ENCODE measurements at regions of chr12 and their contacts with region 1.

Region 1: GRCh38 chr12:79844693-79845092 is 90.2 kb downstream of the PPP1R12A start:
- DNase-seq: no peak
- ATAC-seq: no peak
- H3K4me3 ChIP-seq: no peak overlapping the region
- H3K27ac ChIP-seq: no peak overlapping the region
- H3K4me1 ChIP-seq: no peaks in the 10 kb centered on the region
- H3K27me3 ChIP-seq: no peaks in the 10 kb centered on the region

Region 2: GRCh38 chr12:79874665-79875064 is 30.0 kb after region 1 on chr12:
- intact Hi-C with region 1: loop called in 1 of 2 experiments (anchors 5 kb)
- DNase-seq: no peak
- ATAC-seq: no peak
- H3K4me3 ChIP-seq: no peak overlapping the region
- H3K27ac ChIP-seq: no peak overlapping the region
- H3K4me1 ChIP-seq: peaks cover 2% of the 10 kb centered on the region in 2 donors
- H3K27me3 ChIP-seq: no peaks in the 10 kb centered on the region

Measured in aorta (tissue), 5 donors.